Activated T-helper 2 cell treated with anti-CD3 and anti-CD28 coated beads, Interferon-gamma antibody, Interleukin-2, Interleukin-4, amounts not matched to agents 10 μg/mL and 5 μg/mL and 100 μg/mL, durations not matched to agents 14 hours and 24 hours and 36 hours (primary cell): ENCODE measurements at regions of chr22 and their contacts with region 1.

Region 1: DNA sequence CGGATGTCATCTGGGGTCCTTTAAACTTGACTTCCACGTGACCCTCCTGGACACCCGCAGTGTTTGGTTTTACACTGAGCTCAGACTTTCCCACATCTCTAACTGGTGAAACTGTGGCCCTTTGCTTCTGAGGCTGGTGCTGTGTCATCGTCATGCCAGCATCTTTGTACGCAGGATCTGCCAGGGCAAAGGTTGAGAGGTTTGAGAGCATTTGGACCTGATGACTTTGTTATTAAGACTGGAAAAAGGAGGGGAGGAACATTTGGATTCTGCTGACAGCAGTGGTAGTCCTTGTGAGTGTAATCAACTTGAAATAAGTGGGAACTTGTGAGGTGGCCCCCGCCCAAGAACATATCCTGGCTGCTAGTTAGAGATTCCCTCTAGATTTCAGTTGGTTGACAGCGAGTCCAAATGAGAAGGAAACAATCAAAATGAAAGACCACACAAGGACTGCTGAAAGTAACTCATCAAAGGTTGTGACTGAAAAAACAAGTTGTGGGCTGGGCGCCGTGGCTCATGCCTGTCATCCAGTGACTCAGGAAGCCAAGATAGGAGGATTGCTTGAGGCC is 102.5 kb downstream of the KIAA1671 start:
- DNase-seq: peak; percentile 40
- H3K4me3 Mint-ChIP-seq: peak overlapping the region; percentile 0
- H3K27ac Mint-ChIP-seq: peak overlapping the region; percentile 86
- H3K4me1 Mint-ChIP-seq: peaks cover 38% of the 10 kb centered on the region
- H3K27me3 Mint-ChIP-seq: no peaks in the 10 kb centered on the region

Region 2: DNA sequence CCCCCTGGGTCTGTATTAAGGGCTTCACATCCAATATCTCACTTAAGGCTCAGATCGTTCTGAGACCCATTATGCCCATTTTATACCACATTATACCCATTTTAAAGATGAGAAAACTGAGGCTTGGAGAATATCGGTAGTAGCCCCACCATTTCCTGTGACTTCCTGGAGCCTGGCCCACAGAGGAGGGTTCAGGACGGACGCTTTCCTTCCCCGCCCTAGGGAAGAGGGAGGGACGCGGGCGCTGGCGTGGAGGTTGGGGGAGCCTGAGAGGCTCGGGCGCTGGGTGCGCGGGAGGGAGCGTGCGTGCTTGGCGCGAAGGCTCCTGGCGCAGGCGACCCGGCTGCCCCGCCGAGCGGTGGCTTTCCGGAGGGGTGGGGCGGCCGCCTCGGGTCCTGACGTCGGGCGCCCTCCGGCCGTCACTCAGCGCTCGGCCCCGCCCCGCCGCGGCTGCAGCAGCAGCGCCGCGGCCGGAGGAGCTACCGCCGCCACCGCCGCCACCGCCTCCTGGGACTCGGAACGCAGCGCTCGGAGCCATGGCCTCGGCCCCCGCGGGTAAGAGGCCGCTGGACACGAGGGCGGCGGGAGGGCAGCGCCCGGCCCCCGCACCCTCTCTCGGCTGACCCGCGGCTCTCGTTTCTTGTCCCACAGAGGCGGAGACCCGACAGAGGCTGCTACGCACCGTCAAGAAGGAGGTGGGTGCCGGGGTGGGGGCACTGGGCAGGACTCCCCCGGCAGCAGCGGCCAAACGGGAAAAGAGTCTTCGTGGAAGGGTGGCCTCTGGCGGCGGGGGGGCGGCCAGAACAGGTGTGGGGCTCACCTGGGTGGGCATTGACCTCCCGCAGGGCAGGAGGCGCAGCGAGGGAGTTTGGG is 249.0 kb before region 1 on chr22 and contains the start of gene SGSM1:
- intact Hi-C with region 1: loop called (anchors 2 kb)
- DNase-seq: peak; percentile 71
- H3K4me3 Mint-ChIP-seq: peak within 1 kb of the TSS; percentile 70
- H3K27ac Mint-ChIP-seq: no peak within 1 kb of the TSS
- H3K4me1 Mint-ChIP-seq: peaks cover 38% of the 10 kb centered on the region
- H3K27me3 Mint-ChIP-seq: peaks cover 21% of the 10 kb centered on the region
- total RNA-seq, gene SGSM1: 0.07 TPM in 1 of 2 replicates, not detected in the other

Region 3: DNA sequence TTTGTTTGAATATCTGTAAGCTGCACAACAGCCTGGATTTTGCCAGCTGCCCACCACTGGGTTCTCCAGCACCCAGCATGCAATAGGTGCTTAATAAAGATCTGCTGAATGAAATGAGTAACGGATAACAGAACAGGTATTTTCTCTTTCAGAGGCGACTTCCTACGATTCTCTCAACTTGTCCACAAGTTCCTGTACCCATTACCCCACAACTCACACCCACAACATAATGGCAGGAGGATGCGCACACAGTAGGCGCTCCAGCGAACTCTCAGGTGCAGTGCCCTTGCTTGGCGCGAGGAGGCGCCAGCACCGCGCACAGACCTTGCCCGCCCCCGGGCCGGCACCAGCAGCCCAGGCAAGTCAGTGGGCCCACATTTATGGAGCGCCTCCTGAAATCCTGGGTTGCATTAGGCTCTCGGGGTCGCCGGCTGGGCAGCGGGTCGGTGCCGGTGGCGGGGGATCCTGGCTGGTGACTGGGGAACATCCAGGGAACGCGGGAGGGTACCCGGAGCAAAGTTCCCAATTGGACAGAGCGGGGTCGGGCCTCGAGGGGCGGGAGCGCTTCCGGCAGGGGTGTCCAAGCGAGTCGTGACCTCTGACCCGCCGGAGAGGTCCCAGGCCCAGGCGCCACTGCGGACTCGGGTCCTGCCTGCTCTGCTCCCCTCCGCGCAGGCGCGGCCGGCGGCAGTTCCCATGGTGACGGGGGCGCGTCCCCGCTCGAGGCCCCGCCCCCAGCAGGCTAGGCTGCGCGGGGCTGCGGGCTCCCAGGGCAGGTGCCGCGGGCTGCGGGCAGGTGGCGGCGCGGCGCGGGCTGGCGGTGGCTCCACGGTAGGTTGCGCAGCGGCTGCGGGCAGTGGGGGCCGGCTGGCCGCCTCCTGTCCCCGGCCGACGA is 102.8 kb before region 1 on chr22 and contains the start of gene KIAA1671:
- intact Hi-C with region 1: loop called (anchors 2 kb)
- DNase-seq: peak; percentile 85
- H3K4me3 Mint-ChIP-seq: peak within 1 kb of the TSS; percentile 80
- H3K27ac Mint-ChIP-seq: peak within 1 kb of the TSS; percentile 40
- H3K4me1 Mint-ChIP-seq: peaks cover 16% of the 10 kb centered on the region
- H3K27me3 Mint-ChIP-seq: peaks cover 56% of the 10 kb centered on the region
- total RNA-seq, gene KIAA1671: 10.5 TPM in 2 replicates

Region 4: DNA sequence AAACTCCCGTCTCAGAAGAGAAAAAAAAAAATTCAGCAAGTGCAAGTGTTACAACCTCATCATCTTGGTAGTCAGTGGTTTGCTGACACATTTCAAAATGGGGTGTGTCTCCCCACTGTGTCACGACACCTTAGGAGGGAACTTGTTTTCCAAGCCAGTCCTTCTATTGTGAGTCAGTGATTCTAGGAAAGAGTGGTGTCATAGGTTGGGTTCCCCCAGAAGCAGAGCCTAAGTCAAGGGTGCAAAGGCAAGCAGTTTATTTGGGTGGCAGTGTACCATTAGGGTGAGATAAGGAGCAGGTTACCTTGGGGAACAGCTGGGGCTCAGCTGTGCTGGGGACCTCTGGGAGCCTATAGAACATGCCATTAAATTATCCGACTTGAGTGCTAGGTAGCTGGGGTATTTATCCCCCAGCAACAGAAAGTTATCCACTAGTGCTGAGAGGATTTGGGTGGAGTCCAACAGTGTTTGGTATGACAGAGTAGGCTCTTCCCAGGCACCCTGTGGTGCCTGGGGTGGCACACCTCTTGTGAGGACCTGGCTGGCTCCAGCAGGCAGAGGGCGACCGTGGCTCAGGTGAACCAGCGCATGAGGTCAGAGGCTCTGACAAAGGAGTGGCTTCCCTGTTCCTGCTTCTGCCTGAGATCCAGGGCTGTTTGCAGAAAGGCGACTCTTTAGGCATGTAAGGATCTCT is 60.8 kb before region 1 on chr22:
- intact Hi-C with region 1: loop called (anchors 2 kb)
- DNase-seq: peak; percentile 63
- H3K4me3 Mint-ChIP-seq: no peak overlapping the region
- H3K27ac Mint-ChIP-seq: peak overlapping the region; percentile 85
- H3K4me1 Mint-ChIP-seq: peaks cover 44% of the 10 kb centered on the region
- H3K27me3 Mint-ChIP-seq: no peaks in the 10 kb centered on the region

Region 5: DNA sequence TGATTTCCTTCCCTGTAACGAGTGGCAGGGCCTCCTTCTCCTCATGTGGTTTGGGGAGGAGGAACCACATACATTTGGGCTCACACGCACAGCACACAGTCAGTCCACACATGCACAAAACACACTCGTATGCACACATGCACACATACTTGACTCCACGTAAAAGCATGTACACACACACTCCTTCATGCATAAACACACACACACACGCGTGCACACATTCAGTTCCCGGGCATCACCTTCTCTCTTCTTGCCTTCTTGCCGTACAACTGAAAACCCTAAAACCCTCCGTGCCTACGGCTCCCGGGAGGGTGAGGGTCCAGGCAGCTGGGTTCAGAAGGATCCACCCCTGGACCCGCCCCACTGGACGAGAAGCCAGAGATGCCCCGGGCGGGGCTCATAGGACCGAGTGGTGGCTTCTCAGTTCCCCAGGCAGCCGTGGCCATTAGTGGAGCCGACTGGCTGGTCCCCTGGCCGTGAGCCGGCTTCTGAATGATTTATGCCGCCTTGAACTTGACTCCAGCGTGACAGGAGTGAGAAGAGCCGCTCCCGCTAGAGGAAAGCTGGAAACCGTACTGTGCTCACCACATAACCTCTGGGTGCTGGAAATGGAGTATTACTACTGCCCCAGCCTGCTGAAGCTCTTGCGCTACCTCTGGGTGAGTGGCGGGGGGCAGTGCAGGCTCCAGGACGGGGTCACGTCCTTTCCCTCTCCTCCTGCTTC is 14.9 kb after region 1 on chr22:
- intact Hi-C with region 1: loop called (anchors 1 kb)
- DNase-seq: peak; percentile 22
- H3K4me3 Mint-ChIP-seq: peak overlapping the region; percentile 84
- H3K27ac Mint-ChIP-seq: peak overlapping the region; percentile 95
- H3K4me1 Mint-ChIP-seq: peaks cover 65% of the 10 kb centered on the region
- H3K27me3 Mint-ChIP-seq: no peaks in the 10 kb centered on the region

Region 6: GRCh38 chr22:25120093-25120561 is 65.1 kb after region 1 on chr22:
- intact Hi-C with region 1: no loop called
- DNase-seq: no peak
- H3K4me3 Mint-ChIP-seq: no peak overlapping the region
- H3K27ac Mint-ChIP-seq: no peak overlapping the region
- H3K4me1 Mint-ChIP-seq: no peaks in the 10 kb centered on the region
- H3K27me3 Mint-ChIP-seq: no peaks in the 10 kb centered on the region